CD8-positive, alpha-beta T cell (primary cell): ENCODE measurements at regions of chr1 and their contacts with region 1.

Region 1: DNA sequence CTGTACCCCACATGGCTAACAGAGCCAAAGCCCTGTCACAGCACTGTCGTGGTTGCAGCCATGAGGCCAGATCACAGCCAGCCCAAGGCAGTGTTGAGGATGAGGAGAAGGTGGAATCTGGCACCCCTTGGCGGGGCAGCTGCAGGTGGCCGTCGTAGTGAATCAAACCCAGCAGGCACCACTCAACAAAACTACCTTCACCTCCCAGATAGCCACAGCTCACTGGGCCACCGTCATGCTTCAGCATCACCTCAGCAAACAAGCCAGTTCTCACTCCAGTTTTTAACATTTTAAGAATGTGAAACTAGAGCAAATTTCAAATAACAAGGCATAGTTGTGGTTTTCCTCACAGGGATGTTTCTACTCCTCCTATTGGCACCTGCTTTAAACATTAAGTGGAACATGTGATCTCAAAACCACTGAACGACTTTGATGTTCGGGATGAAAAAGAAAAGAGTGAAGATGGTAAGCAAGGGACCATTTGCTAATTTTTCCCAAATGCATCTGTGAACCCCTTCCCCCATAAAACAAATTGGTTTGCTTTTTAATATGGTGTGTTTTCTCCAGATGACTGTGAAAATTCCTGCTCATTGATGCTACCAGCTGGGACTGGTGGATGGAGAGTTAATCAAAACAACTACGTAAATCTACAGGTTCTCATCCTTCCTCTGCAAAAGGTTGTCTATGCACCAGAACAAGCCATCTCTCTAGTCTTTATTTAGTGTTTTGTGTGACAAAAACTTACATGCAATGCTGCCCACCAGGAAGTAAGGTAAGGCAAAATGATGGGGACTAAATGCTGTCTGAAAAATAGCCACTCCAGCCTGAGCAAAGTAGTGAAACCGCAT is 45.5 kb downstream of the TOR1AIP2 start:
- DNase-seq: peak in 2 of 9 experiments; percentile 47 to 49
- ATAC-seq: peak; percentile 66
- H3K4me3 ChIP-seq: no peak overlapping the region
- H3K4me3 Mint-ChIP-seq: peak overlapping the region; percentile 66
- H3K27ac ChIP-seq: peak overlapping the region; percentile 1 to 8
- H3K27ac Mint-ChIP-seq: peak overlapping the region; percentile 75
- H3K4me1 ChIP-seq: peaks cover 23% of the 10 kb centered on the region
- H3K4me1 Mint-ChIP-seq: peaks cover 24% of the 10 kb centered on the region
- H3K27me3 ChIP-seq: no peaks in the 10 kb centered on the region
- H3K27me3 Mint-ChIP-seq: peaks cover 2% of the 10 kb centered on the region
- CTCF ChIP-seq: no peak

Region 2: GRCh38 chr1:178986204-178986603 is 845.9 kb before region 1 on chr1:
- CTCF ChIA-PET with region 1: no interaction called
- POLR2A ChIA-PET with region 1: no interaction called
- intact Hi-C with region 1: no loop called
- DNase-seq: no peak
- ATAC-seq: no peak
- H3K4me3 ChIP-seq: no peak overlapping the region
- H3K4me3 Mint-ChIP-seq: no peak overlapping the region
- H3K27ac ChIP-seq: no peak overlapping the region
- H3K27ac Mint-ChIP-seq: no peak overlapping the region
- H3K4me1 ChIP-seq: no peaks in the 10 kb centered on the region
- H3K4me1 Mint-ChIP-seq: no peaks in the 10 kb centered on the region
- H3K27me3 ChIP-seq: no peaks in the 10 kb centered on the region
- H3K27me3 Mint-ChIP-seq: no peaks in the 10 kb centered on the region
- CTCF ChIP-seq: no peak

Region 3: GRCh38 chr1:179816196-179816960 is 15.7 kb before region 1 on chr1:
- CTCF ChIA-PET with region 1: interaction called, 19 read pairs
- POLR2A ChIA-PET with region 1: interaction called, 11 read pairs
- intact Hi-C with region 1: no loop called
- DNase-seq: no peak
- ATAC-seq: no peak
- H3K4me3 ChIP-seq: no peak overlapping the region
- H3K4me3 Mint-ChIP-seq: peak overlapping the region; percentile 92
- H3K27ac ChIP-seq: no peak overlapping the region
- H3K27ac Mint-ChIP-seq: no peak overlapping the region
- H3K4me1 ChIP-seq: peaks cover 12% of the 10 kb centered on the region
- H3K4me1 Mint-ChIP-seq: peaks cover 19% of the 10 kb centered on the region
- H3K27me3 ChIP-seq: no peaks in the 10 kb centered on the region
- H3K27me3 Mint-ChIP-seq: no peaks in the 10 kb centered on the region
- CTCF ChIP-seq: no peak